Common myeloid progenitor, CD34-positive (primary cell): ENCODE measurements at regions of chr6 and their contacts with region 1.

Region 1: GRCh38 chr6:45922728-45923351 is 92.8 kb downstream of the CLIC5 start:
- DNase-seq: peak; percentile 82 to 86 (median 86)
- H3K4me3 ChIP-seq: no peak overlapping the region
- H3K27ac ChIP-seq: no peak overlapping the region
- H3K4me1 ChIP-seq: peaks cover 0 to 9% (median 5%) of the 10 kb centered on the region in 4 experiments
- H3K27me3 ChIP-seq: no peaks in the 10 kb centered on the region

Region 2: DNA sequence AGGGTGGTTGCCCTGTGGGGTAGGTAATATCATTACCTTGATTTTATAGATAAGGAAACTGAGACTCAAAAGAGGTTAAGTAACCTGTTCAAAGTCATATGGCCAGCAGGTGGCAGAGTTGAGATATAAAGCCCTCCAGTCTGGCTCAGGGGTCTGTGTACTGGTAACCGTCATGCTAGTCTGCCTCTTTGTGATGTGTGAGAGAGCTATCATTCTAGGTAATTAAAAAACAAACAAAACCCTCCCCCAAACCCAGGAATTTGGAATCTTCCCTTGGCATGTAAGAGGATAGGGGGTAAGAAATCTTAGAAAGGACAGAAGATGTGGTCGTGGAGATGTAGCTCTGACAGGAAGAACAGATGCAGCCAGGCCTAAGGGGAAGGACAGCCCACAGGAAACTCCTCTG is 1329.3 kb before region 1 on chr6:
- CTCF ChIA-PET with region 1: interaction called, 10 read pairs
- POLR2A ChIA-PET with region 1: no interaction called
- DNase-seq: peak; percentile 72 to 86 (median 83)
- H3K4me3 ChIP-seq: no peak overlapping the region
- H3K27ac ChIP-seq: no peak overlapping the region
- H3K4me1 ChIP-seq: peaks cover 0 to 15% (median 6%) of the 10 kb centered on the region in 4 experiments
- H3K27me3 ChIP-seq: no peaks in the 10 kb centered on the region

Region 3: GRCh38 chr6:44630125-44631028 is 1292.5 kb before region 1 on chr6:
- CTCF ChIA-PET with region 1: interaction called, 27 read pairs
- POLR2A ChIA-PET with region 1: no interaction called
- DNase-seq: peak; percentile 55 to 67 (median 61)
- H3K4me3 ChIP-seq: no peak overlapping the region
- H3K27ac ChIP-seq: no peak overlapping the region
- H3K4me1 ChIP-seq: peaks cover 0 to 12% (median 10%) of the 10 kb centered on the region in 4 experiments
- H3K27me3 ChIP-seq: no peaks in the 10 kb centered on the region

Region 4: GRCh38 chr6:44655412-44656342 is 1267.2 kb before region 1 on chr6:
- CTCF ChIA-PET with region 1: interaction called, 23 read pairs
- POLR2A ChIA-PET with region 1: no interaction called
- DNase-seq: peak; percentile 75 to 88 (median 87)
- H3K4me3 ChIP-seq: peak overlapping the region in 3 of 7 experiments; percentile 27 to 53 (median 35)
- H3K27ac ChIP-seq: no peak overlapping the region
- H3K4me1 ChIP-seq: peaks cover 0 to 23% (median 16%) of the 10 kb centered on the region in 4 experiments
- H3K27me3 ChIP-seq: no peaks in the 10 kb centered on the region

Region 5: DNA sequence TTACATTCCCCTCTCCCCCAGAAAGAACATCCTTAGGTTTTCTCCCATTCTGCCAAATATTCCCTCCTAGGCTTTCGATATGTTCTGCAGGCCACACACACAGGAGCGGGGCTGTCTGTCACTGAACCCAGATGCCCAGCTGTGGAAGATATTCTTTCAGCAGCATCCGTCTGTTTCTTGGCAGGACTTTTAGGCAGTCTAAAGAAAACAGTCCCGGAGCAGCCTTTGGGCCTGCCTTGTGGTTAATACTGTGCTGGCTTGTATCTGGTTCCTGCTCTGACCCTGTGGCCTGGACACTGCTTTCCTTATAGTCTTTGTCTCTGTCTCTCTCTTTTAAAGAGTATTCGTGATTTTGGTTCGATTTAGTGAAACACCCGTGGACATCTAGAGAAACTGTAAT is 450.5 kb before region 1 on chr6:
- CTCF ChIA-PET with region 1: no interaction called
- POLR2A ChIA-PET with region 1: no interaction called
- DNase-seq: no peak
- H3K4me3 ChIP-seq: no peak overlapping the region
- H3K27ac ChIP-seq: no peak overlapping the region
- H3K4me1 ChIP-seq: peaks cover 0 to 14% (median 8%) of the 10 kb centered on the region in 4 experiments
- H3K27me3 ChIP-seq: no peaks in the 10 kb centered on the region

Region 6: DNA sequence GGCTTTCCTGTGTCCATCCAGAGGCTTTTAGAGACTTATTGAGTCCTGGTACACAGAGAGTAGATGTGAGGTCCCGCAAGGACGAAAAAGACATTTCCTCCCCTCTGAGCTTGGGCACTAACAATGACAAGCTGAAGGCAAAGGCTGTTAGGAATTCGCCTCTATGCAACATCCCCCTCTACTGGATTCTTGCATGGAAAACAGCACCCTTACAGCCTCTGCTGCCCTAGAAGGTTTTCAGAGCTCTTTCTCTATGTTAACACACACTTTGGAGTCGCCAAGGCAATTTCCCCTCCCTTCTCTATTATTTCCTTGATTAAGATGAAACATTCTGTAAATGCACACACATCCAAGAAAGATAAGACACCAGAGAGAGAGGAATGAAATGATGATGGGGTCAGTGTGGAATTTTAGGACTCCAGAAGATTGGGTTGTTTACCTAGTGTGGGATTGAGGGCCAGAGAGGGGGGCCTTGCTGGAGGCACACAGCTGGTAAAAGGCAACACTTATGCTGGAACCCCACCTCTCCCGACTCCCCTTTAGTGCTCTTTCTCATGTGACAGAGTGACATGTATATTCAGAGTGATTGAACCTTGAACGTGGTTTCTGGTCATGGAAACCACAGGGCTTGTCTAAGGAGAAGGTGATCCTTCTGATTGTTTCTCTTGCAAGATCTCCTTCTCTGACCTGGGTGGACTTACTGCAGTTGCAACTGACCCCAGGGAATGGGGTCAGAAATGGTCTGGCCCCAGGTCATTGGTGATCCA is 207.9 kb before region 1 on chr6:
- CTCF ChIA-PET with region 1: interaction called, 31 read pairs
- POLR2A ChIA-PET with region 1: no interaction called
- DNase-seq: peak; percentile 81 to 86 (median 84)
- H3K4me3 ChIP-seq: no peak overlapping the region
- H3K27ac ChIP-seq: no peak overlapping the region
- H3K4me1 ChIP-seq: peaks cover 0 to 50% (median 20%) of the 10 kb centered on the region in 4 experiments
- H3K27me3 ChIP-seq: no peaks in the 10 kb centered on the region

Region 7: DNA sequence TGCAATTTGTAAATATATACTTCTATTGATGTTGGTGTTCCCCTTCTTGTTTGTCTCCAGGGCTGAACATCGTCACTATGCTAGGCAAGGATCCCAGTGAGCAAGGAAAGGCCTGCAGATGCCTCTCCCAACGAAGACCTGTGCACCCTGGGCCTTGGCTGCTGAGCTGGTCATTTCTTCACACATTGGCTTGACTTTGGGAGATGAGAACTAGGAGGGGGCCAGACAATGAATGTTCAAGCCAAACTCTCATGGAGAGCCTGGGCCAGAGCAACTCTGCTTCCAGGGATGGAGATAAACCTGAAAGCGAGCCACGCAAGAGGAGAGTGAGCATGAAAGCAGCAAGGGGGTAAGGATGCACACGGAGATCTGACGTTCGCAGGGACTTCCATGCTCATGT is 11.1 kb before region 1 on chr6:
- CTCF ChIA-PET with region 1: interaction called, 37 read pairs
- POLR2A ChIA-PET with region 1: no interaction called
- DNase-seq: no peak
- H3K4me3 ChIP-seq: no peak overlapping the region
- H3K27ac ChIP-seq: no peak overlapping the region
- H3K4me1 ChIP-seq: no peaks in the 10 kb centered on the region
- H3K27me3 ChIP-seq: no peaks in the 10 kb centered on the region

Region 8: GRCh38 chr6:45997875-45998506 is 75.2 kb after region 1 on chr6:
- CTCF ChIA-PET with region 1: no interaction called
- POLR2A ChIA-PET with region 1: no interaction called
- DNase-seq: no peak
- H3K4me3 ChIP-seq: no peak overlapping the region
- H3K27ac ChIP-seq: no peak overlapping the region
- H3K4me1 ChIP-seq: no peaks in the 10 kb centered on the region
- H3K27me3 ChIP-seq: no peaks in the 10 kb centered on the region